Activated naive CD4-positive, alpha-beta T cell treated with anti-CD3 and anti-CD28 coated beads for 36 hours (primary cell): ENCODE measurements at regions of chr6 and their contacts with region 1.

Region 1: GRCh38 chr6:89927791-89928550 is 33.7 kb downstream of the GJA10 start:
- DNase-seq: no peak
- H3K4me3 Mint-ChIP-seq: no peak overlapping the region
- H3K27ac Mint-ChIP-seq: peak overlapping the region; percentile 81
- H3K4me1 Mint-ChIP-seq: peaks cover 54% of the 10 kb centered on the region
- H3K27me3 Mint-ChIP-seq: no peaks in the 10 kb centered on the region

Region 2: DNA sequence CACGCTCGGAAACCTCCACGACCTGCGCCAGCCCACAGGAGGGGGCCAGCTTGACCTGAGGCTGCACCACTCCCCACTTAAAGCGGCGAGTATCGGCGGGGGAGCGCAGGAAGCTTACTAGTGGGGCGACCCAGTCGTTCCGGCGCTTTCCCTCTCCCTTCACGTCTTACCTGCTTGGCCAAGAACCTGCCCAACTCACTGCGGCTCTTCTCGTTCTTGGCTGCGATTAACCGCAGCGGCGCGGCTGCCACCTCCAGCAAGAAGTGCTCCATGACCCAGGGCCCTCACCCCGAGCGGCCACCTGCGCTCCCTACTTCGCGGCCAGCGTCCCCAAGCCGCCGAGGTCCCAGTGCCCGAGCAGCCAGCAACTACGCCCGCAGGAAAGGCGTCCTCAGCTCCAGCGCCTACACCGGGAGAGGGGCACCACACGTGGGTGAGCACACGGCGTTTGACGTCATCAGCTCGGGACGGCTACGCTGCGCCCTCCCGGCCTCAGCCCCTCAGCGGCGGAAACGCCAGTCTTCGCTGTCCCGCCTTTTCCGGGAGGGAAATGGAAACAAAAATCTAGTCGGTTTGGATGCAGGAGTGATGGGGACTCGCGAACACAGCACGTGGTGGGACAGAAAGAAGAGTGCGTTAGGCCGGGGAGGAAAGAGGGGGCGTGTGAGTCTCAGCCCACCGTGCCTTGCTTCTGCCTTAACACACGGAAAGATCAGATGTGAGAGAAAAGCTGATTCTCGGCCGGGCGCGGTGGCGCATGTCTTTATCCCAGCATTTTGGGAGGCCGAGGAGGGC is 108.4 kb before region 1 on chr6 and contains the start of gene MDN1:
- CTCF ChIA-PET with region 1: no interaction called
- intact Hi-C with region 1: loop called (anchors 5 kb)
- DNase-seq: peak; percentile 94
- H3K4me3 Mint-ChIP-seq: peak within 1 kb of the TSS; percentile 82
- H3K27ac Mint-ChIP-seq: peak within 1 kb of the TSS; percentile 88
- H3K4me1 Mint-ChIP-seq: peaks cover 36% of the 10 kb centered on the region
- H3K27me3 Mint-ChIP-seq: no peaks in the 10 kb centered on the region
- total RNA-seq, gene MDN1: 42.1 to 52.1 TPM

Region 3: DNA sequence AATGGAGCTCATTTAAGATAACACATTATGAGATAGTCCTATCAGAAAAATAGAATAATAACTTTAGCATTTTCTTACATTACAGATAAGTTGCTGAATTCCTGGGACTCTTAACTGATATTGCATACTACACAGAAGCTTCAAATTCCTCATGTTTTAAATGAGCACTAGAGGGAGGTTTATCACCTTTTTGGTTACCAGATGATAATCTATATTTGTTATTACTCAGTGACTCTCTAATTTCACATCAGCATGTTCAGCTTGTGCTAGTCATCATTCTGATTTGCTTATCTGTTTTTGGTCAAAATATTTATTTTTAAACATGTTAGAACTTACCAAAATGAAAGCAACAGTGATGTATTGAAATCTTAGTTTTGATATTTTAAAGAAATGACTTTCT is 54.2 kb before region 1 on chr6:
- CTCF ChIA-PET with region 1: no interaction called
- intact Hi-C with region 1: loop called (anchors 5 kb)
- DNase-seq: no peak
- H3K4me3 Mint-ChIP-seq: no peak overlapping the region
- H3K27ac Mint-ChIP-seq: no peak overlapping the region
- H3K4me1 Mint-ChIP-seq: no peaks in the 10 kb centered on the region
- H3K27me3 Mint-ChIP-seq: no peaks in the 10 kb centered on the region